ENCODE measurements at regions of chr9 and their contacts with region 1.

Region 1: GRCh38 chr9:32968101-32969011 is 33.1 kb downstream of the APTX start:
- ATAC-seq: peak in 1 of 8 experiments; percentile 23
- H3K4me3 ChIP-seq: no peak overlapping the region
- H3K27ac ChIP-seq: no peak overlapping the region
- H3K4me1 ChIP-seq: no peaks in the 10 kb centered on the region

Region 2: GRCh38 chr9:32384364-32385151 is 583.8 kb before region 1 on chr9 and contains the start of gene ACO1:
- in situ Hi-C with region 1: loop called in 6 of 9 experiments (anchors 10 to 25 kb)
- ATAC-seq: peak; percentile 89 to 97 (median 93)
- H3K4me3 ChIP-seq: peak within 1 kb of the TSS; percentile 64 to 95 (median 72)
- H3K27ac ChIP-seq: peak within 1 kb of the TSS; percentile 46 to 67
- H3K4me1 ChIP-seq: peaks cover 0 to 2% of the 10 kb centered on the region in 2 donors
- total RNA-seq, gene ACO1: 13.4 to 44.4 (median 16.0) TPM

Region 3: GRCh38 chr9:32579706-32580331 is 388.5 kb before region 1 on chr9:
- in situ Hi-C with region 1: loop called in 7 of 9 experiments (anchors 5 to 25 kb)
- ATAC-seq: peak in 4 of 8 experiments; percentile 24 to 65 (median 53)
- H3K4me3 ChIP-seq: no peak overlapping the region
- H3K27ac ChIP-seq: no peak overlapping the region
- H3K4me1 ChIP-seq: no peaks in the 10 kb centered on the region

Region 4: DNA sequence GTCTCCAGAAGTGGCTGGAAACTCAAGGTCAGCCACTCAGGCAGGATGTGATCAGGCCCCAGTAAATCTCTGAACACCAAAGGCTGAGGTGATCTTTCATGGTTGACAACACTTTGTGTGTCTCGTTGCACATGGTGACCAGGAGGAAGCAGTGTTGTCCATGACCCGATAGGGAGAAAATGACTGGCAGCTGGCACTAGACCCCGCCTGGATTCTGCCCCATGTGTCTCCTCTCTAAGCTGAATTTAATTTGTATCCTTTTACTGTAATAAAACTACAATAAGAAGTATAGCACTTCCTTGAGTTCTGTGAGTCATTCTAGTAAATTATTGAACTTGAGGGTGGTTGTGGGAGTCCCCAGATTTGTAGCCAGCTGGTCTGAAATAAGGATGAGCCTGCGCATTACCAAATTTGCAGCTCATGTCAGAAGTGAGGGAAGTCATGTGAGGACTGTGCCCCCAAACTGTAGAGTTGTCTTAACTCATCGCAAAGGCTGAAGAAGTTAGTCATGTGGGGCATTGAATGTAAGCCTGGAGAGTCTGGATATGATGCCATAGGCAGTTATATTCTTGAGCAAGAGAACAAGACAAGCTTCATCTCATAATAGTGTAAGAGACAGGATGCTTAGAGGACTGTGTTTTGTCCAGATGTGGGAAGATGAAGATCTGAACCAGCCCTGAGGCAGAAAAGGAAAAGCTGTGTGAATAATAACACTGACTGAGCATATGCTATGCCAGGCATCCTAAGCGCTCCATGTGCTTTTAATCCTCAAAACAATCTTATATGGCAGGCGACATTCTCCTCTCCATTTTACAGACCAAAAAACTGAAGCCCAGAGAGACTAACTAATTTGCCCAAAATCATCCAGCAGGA is 129.1 kb before region 1 on chr9:
- in situ Hi-C with region 1: loop called in 1 of 9 experiments (anchors 25 kb)
- ATAC-seq: no peak
- H3K4me3 ChIP-seq: no peak overlapping the region
- H3K27ac ChIP-seq: no peak overlapping the region
- H3K4me1 ChIP-seq: no peaks in the 10 kb centered on the region